Heart left ventricle (tissue), 16 donors: ENCODE measurements at regions of chr11 and their contacts with region 1.

Region 1: GRCh38 chr11:80122211-80122610 is 681.4 kb upstream of the TENM4 start:
- DNase-seq: peak in 4 of 5 donors; percentile 20 to 51 (median 28)
- ATAC-seq: peak; percentile 85 to 97 (median 90)
- H3K4me3 ChIP-seq: no peak overlapping the region
- H3K27ac ChIP-seq: peak overlapping the region in 4 of 12 donors; percentile 22 to 78 (median 32)
- H3K4me1 ChIP-seq: peaks cover 0 to 13% (median 4%) of the 10 kb centered on the region in 12 donors
- H3K27me3 ChIP-seq: no peaks in the 10 kb centered on the region
- CTCF ChIP-seq: no peak
- POLR2A ChIP-seq: no peak

Region 2: DNA sequence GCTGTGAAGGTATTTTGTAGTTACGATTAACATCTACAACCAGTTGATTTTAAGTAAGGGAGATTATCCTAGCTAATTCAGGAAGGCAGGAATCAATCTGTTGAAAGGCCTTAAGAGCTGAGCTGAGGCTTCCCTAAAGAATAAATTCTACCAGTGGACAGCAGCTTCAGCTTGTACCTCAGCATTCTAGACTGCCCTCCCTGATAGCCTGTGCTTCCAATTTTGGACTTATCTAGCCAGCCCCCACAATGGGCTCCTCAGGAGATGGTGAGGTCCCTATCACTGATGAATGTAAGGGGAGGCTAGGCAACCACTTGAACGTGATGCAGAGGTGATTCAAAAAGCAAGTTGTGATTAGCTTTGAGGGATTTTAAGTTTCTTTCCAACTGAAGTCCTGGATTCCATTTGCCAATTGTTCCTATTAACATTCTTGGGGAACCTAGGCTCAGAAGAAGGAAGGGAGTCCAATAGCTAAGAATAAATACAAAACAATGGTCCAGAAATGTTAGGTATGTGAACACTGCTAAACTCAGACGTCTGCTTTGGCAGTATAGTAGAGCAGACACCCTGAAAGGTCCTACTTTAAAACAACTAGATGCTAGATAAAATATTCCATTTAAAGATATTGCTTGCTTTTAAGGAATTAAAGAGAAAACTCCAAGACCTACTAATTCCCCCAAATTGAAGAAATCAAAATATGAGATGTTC is 277.1 kb before region 1 on chr11:
- intact Hi-C with region 1: loop called in 1 of 10 experiments (anchors 10 kb)
- DNase-seq: no peak
- ATAC-seq: peak in 3 of 4 donors; percentile 63 to 94 (median 86)
- H3K4me3 ChIP-seq: no peak overlapping the region
- H3K27ac ChIP-seq: peak overlapping the region in 4 of 12 donors; percentile 14 to 61 (median 47)
- H3K4me1 ChIP-seq: peaks cover 0 to 12% (median 0%) of the 10 kb centered on the region in 12 donors
- H3K27me3 ChIP-seq: no peaks in the 10 kb centered on the region
- CTCF ChIP-seq: no peak
- POLR2A ChIP-seq: no peak

Region 3: DNA sequence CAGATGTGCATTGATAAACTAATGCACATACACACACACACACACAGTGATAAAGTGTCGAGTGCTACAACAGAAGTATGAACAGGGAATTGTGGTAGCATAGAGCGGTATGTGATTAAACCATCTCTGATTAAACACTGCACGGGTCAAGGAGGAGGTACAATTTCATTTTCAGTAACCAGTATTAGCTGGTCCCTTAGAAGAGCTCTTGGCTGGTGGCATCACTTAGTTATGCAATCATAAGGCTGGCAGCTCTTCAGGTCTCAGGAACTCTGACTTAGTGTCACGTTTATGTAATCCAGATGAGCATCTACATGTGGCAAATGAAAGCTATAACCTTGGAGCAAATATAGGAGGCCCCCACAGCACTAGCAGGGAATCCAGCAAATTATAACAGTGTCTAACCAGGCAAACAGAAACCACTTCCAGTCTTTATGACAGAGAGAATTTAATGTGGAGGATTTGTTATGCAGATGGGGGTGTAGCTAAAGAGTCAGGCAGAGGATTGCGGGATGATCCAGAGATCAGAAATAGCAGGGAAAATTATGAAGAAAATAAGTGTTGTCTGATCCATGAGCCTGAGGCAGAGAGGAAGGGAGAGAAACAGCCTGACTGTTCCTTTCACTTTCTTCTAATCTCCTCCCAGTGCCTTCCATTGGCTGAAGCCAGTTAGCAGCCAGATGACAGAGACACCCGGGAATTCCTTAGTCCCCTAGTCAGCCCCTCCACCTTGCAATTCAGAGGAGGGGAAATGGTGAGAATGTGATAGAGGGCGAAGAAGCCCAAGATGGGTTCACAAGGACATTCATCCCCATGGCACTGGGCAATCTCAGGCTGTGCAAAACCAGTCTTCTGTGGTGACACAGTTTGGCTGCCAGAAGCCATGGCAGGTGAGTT is 148.2 kb before region 1 on chr11:
- intact Hi-C with region 1: loop called in 1 of 10 experiments (anchors 5 kb)
- DNase-seq: no peak
- ATAC-seq: peak in 3 of 4 donors; percentile 57 to 71 (median 64)
- H3K4me3 ChIP-seq: peak overlapping the region in 6 of 12 donors; percentile 2 to 26 (median 15)
- H3K27ac ChIP-seq: no peak overlapping the region
- H3K4me1 ChIP-seq: no peaks in the 10 kb centered on the region
- H3K27me3 ChIP-seq: no peaks in the 10 kb centered on the region
- CTCF ChIP-seq: no peak
- POLR2A ChIP-seq: no peak